ENCODE measurements at regions of chr22 and their contacts with region 1.

Region 1: GRCh38 chr22:32539631-32540421 is 65.2 kb downstream of the FBXO7 start:
- DNase-seq: no peak
- ATAC-seq: peak in 1 of 2 donors; percentile 51
- H3K4me3 ChIP-seq: no peak overlapping the region
- H3K27ac ChIP-seq: peak overlapping the region; percentile 30
- H3K4me1 ChIP-seq: peaks cover 10% of the 10 kb centered on the region
- H3K27me3 ChIP-seq: no peaks in the 10 kb centered on the region

Region 2: GRCh38 chr22:32591620-32592019 is 51.8 kb after region 1 on chr22:
- intact Hi-C with region 1: no loop called
- DNase-seq: no peak
- ATAC-seq: peak in 1 of 2 donors; percentile 53
- H3K4me3 ChIP-seq: no peak overlapping the region
- H3K27ac ChIP-seq: no peak overlapping the region
- H3K4me1 ChIP-seq: no peaks in the 10 kb centered on the region
- H3K27me3 ChIP-seq: no peaks in the 10 kb centered on the region

Region 3: GRCh38 chr22:32622004-32622743 is 82.3 kb after region 1 on chr22:
- intact Hi-C with region 1: loop called in 2 of 4 experiments (anchors 5 to 10 kb)
- DNase-seq: peak; percentile 66 to 83 (median 83)
- ATAC-seq: peak; percentile 64 to 77
- H3K4me3 ChIP-seq: no peak overlapping the region
- H3K27ac ChIP-seq: peak overlapping the region; percentile 97
- H3K4me1 ChIP-seq: peaks cover 55% of the 10 kb centered on the region
- H3K27me3 ChIP-seq: no peaks in the 10 kb centered on the region

Measured in right cardiac atrium (tissue), 5 donors.